ENCODE measurements at regions of chr10 and their contacts with region 1.

Region 1: GRCh38 chr10:16545116-16545736 is 23.5 kb upstream of the C1QL3 start:
- DNase-seq: peak; percentile 24 to 46 (median 32)
- ATAC-seq: peak; percentile 79
- H3K4me3 ChIP-seq: no peak overlapping the region
- H3K27ac ChIP-seq: no peak overlapping the region
- H3K4me1 ChIP-seq: no peaks in the 10 kb centered on the region; a peak in 1 of 5 replicates
- H3K27me3 ChIP-seq: peaks cover 6 to 12% of the 10 kb centered on the region in 2 experiments; a peak in 4 of 5 replicates
- CTCF ChIP-seq: peak; percentile 46 to 70 (median 69); a peak in 5 of 6 replicates
- EP300 ChIP-seq: no peak
- POLR2A ChIP-seq: no peak
- RAD21 ChIP-seq: peak; percentile 44 to 73

Region 2: DNA sequence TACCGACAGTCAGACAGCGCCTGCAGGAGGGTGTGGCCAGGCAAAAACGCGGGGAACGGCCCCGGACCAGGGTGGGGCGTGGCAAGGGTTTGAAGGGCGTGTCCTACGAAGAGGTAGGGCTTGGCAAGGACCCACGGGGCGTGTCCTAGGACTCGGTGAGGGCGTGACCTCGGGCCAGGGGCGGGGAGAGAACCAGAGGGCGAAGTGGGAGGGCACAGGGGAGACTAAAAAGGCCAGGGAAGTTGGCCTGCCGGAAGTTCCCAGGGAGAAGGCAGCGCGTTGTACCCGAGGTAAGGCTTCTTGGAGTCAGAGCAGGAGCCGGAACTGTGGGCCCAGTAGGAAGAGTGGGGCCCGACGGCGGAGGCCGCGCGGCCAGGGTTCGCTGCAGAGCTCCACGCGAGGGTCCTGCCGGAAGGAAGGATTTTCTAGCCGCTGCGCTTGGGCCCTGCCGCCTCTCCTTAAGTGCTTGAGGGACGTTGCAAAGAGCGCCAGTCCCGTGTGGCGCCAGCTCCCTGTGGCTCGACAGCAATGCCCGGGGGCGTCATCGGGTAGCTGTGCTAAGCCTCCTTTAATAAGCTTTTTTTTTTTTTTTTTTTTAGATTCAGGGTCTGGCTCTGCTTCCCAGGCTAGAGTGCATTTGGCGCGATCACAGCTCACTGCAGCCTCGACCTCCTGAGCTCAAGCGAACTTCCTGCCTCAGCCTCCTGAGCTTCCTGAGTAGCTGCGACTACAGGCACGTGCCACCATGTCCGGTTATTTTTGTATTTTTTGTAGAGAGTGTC is 108.3 kb before region 1 on chr10 and contains the start of gene PTER:
- CTCF ChIA-PET with region 1: no interaction called
- POLR2A ChIA-PET with region 1: no interaction called
- in situ Hi-C with region 1: no loop called
- intact Hi-C with region 1: loop called (anchors 10 kb)
- DNase-seq: peak; percentile 94 to 97 (median 96)
- ATAC-seq: peak; percentile 99
- H3K4me3 ChIP-seq: peak within 1 kb of the TSS; percentile 49
- H3K27ac ChIP-seq: peak within 1 kb of the TSS; percentile 76
- H3K4me1 ChIP-seq: peaks cover 10 to 16% of the 10 kb centered on the region in 2 experiments; a peak in 4 of 5 replicates
- H3K27me3 ChIP-seq: peaks cover 0 to 5% of the 10 kb centered on the region in 2 experiments; a peak in 2 of 5 replicates
- CTCF ChIP-seq: no peak
- EP300 ChIP-seq: no peak
- POLR2A ChIP-seq: peak; percentile 94
- RAD21 ChIP-seq: no peak; a peak in 1 of 4 replicates
- polyA plus RNA-seq, gene PTER: 32.9 to 42.1 TPM

Measured in K562 (cell line).